ENCODE measurements at regions of chr3 and their contacts with region 1.

Region 1: GRCh38 chr3:111238885-111239284 is 167.3 kb downstream of the NECTIN3 start:
- DNase-seq: no peak
- H3K4me3 Mint-ChIP-seq: no peak overlapping the region
- H3K27ac Mint-ChIP-seq: no peak overlapping the region
- H3K4me1 Mint-ChIP-seq: peaks cover 22% of the 10 kb centered on the region
- H3K27me3 Mint-ChIP-seq: no peaks in the 10 kb centered on the region

Region 2: DNA sequence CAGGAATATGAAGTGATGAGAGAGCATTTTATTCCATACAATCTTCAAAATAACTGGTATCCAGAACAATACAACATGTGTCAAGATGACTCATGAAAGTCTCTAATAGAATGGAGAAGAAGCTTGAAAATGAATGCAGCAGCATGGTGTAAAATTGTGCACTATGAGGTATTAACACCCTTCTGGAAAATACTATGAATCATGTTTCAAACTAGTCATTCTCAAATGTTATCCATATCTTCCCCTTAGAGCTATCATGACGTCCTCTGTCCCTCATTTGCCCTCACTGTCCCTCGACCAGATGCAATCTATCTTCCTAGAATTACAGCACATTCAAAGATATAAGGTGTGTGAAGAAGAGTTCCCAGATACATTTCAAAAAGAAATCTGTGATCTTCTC is 30.9 kb after region 1 on chr3:
- CTCF ChIA-PET with region 1: no interaction called
- POLR2A ChIA-PET with region 1: no interaction called
- intact Hi-C with region 1: no loop called
- DNase-seq: no peak
- H3K4me3 Mint-ChIP-seq: no peak overlapping the region
- H3K27ac Mint-ChIP-seq: no peak overlapping the region
- H3K4me1 Mint-ChIP-seq: no peaks in the 10 kb centered on the region
- H3K27me3 Mint-ChIP-seq: no peaks in the 10 kb centered on the region

Region 3: DNA sequence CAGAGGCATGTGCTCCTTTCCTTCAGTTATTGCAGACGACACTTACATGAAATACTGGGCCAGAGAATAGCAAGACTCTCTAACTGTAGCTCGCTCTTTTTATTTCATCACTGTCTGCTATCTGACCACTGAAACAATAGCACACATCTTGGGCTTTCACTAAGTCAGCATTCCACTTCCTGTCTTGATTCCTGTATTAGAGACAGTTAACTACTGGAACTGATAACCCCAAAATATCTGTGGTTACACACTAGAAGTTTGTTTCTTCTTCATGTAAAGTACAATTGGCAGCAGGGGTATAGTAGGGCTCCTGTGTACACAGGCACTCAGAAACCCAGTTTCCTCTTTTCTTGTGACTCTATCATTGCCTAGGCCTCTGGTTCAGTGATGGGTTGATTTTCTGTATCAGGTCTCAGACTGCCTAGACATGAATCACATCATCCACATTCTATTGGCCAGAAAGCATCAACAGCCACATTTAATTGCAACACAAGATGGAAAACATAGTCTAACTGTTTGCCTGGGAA is 72.9 kb after region 1 on chr3:
- CTCF ChIA-PET with region 1: no interaction called
- POLR2A ChIA-PET with region 1: no interaction called
- intact Hi-C with region 1: loop called (anchors 1 kb)
- DNase-seq: no peak
- H3K4me3 Mint-ChIP-seq: no peak overlapping the region
- H3K27ac Mint-ChIP-seq: peak overlapping the region; percentile 73
- H3K4me1 Mint-ChIP-seq: peaks cover 30% of the 10 kb centered on the region
- H3K27me3 Mint-ChIP-seq: no peaks in the 10 kb centered on the region

Region 4: GRCh38 chr3:111610189-111610588 is 371.3 kb after region 1 on chr3:
- CTCF ChIA-PET with region 1: no interaction called
- POLR2A ChIA-PET with region 1: no interaction called
- intact Hi-C with region 1: loop called (anchors 2 kb)
- DNase-seq: no peak
- H3K4me3 Mint-ChIP-seq: peak overlapping the region; percentile 50
- H3K27ac Mint-ChIP-seq: peak overlapping the region; percentile 92
- H3K4me1 Mint-ChIP-seq: peaks cover 96% of the 10 kb centered on the region
- H3K27me3 Mint-ChIP-seq: no peaks in the 10 kb centered on the region

Region 5: GRCh38 chr3:112056451-112056978 is 817.6 kb after region 1 on chr3:
- CTCF ChIA-PET with region 1: no interaction called
- POLR2A ChIA-PET with region 1: no interaction called
- intact Hi-C with region 1: no loop called
- DNase-seq: peak; percentile 53
- H3K4me3 Mint-ChIP-seq: peak overlapping the region; percentile 1
- H3K27ac Mint-ChIP-seq: peak overlapping the region; percentile 25
- H3K4me1 Mint-ChIP-seq: peaks cover 25% of the 10 kb centered on the region
- H3K27me3 Mint-ChIP-seq: peaks cover 11% of the 10 kb centered on the region

Measured in activated CD4-positive, alpha-beta memory T cell treated with anti-CD3 and anti-CD28 coated beads for 36 hours (primary cell).